GM12878 (cell line): ENCODE measurements at regions of chr10 and their contacts with region 1.

Region 1: DNA sequence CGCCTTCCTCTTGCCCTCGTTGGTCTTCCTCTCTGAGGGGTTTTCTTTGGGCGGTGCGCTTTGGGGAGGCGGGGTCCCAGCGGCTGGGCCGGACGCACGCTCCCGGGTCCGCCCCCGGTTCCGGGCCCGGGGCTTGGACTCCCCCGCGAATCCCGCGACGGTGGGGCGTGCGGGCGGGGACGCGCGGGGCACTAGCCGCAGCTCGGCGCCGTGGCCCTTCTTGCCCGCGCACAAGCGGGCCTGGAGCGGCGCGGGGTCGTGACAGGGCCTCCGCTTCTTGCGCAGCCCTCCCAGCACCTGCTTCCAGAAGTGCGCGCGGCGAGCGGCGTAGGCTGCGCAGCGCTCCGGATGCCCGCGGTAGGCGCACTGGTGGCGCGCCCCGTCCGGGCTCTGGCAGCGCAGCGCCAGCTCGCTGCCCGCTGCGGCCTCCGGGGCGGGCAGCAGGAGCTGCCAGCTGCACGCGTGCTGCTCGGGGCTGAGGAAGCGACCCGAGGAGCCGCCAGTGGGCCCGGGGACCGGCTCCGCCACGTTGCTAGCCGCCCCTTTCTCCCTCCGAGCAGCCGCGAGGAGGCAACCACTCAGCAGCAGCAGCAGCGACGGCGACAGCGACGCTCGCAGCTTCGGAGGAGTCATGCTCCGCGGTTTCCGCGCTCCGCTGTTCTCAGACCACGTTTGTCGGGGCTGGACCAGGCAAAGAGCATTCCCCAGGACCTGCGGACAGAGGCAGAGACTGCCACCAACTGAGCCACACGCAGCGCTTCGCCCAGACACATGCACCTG is 759 bp downstream of the FGFBP3 start:
- DNase-seq: peak; percentile 48
- ATAC-seq: peak; percentile 95
- H3K4me3 ChIP-seq: peak overlapping the region; percentile 82
- H3K27ac ChIP-seq: no peak overlapping the region
- H3K4me1 ChIP-seq: no peaks in the 10 kb centered on the region; the same call in 1 of the 2 replicates
- H3K27me3 ChIP-seq: no peaks in the 10 kb centered on the region; a peak in 1 of 4 replicates
- CTCF ChIP-seq: peak; percentile 45 to 62 (median 53)
- EP300 ChIP-seq: no peak
- POLR2A ChIP-seq: no peak; the same call in none of the 2 replicates
- RAD21 ChIP-seq: 0 out of 2 replicates have a peak, but pooled peaks have one; percentile 7

Region 2: GRCh38 chr10:90885176-90885575 is 1023.4 kb before region 1 on chr10:
- CTCF ChIA-PET with region 1: no interaction called
- POLR2A ChIA-PET with region 1: no interaction called
- RAD21 ChIA-PET with region 1: no interaction called
- SMC1A ChIA-PET with region 1: interaction called, 5 read pairs
- in situ Hi-C with region 1: loop called (anchors 25 kb)
- intact Hi-C with region 1: no loop called
- DNase-seq: no peak
- ATAC-seq: no peak
- H3K4me3 ChIP-seq: no peak overlapping the region
- H3K27ac ChIP-seq: no peak overlapping the region
- H3K4me1 ChIP-seq: no peaks in the 10 kb centered on the region
- H3K27me3 ChIP-seq: no peaks in the 10 kb centered on the region
- CTCF ChIP-seq: no peak
- EP300 ChIP-seq: no peak
- POLR2A ChIP-seq: no peak
- RAD21 ChIP-seq: no peak

Region 3: GRCh38 chr10:91389636-91390512 is 518.7 kb before region 1 on chr10:
- CTCF ChIA-PET with region 1: interaction called, 11 read pairs
- POLR2A ChIA-PET with region 1: no interaction called
- RAD21 ChIA-PET with region 1: interaction called, 8 read pairs
- SMC1A ChIA-PET with region 1: interaction called, 5 read pairs
- in situ Hi-C with region 1: loop called (anchors 25 kb)
- intact Hi-C with region 1: loop called (anchors 2 kb)
- DNase-seq: no peak
- ATAC-seq: peak; percentile 97
- H3K4me3 ChIP-seq: no peak overlapping the region
- H3K27ac ChIP-seq: no peak overlapping the region
- H3K4me1 ChIP-seq: no peaks in the 10 kb centered on the region
- H3K27me3 ChIP-seq: peaks cover 0 to 2% of the 10 kb centered on the region in 2 experiments; a peak in 1 of 4 replicates
- CTCF ChIP-seq: peak; percentile 40 to 51 (median 50); a peak in 5 of 6 replicates
- EP300 ChIP-seq: no peak
- POLR2A ChIP-seq: no peak
- RAD21 ChIP-seq: peak; percentile 59

Region 4: GRCh38 chr10:91493313-91493712 is 415.2 kb before region 1 on chr10:
- CTCF ChIA-PET with region 1: no interaction called
- POLR2A ChIA-PET with region 1: no interaction called
- RAD21 ChIA-PET with region 1: interaction called, 3 read pairs
- SMC1A ChIA-PET with region 1: interaction called, 3 read pairs
- in situ Hi-C with region 1: no loop called
- intact Hi-C with region 1: loop called (anchors 5 kb)
- DNase-seq: no peak
- ATAC-seq: peak; percentile 47; the same call in 2 of the 3 replicates
- H3K4me3 ChIP-seq: no peak overlapping the region
- H3K27ac ChIP-seq: no peak overlapping the region
- H3K4me1 ChIP-seq: no peaks in the 10 kb centered on the region
- H3K27me3 ChIP-seq: no peaks in the 10 kb centered on the region
- CTCF ChIP-seq: peak in 1 of 3 experiments; percentile 14; a peak in 2 of 6 replicates
- EP300 ChIP-seq: no peak
- POLR2A ChIP-seq: no peak
- RAD21 ChIP-seq: no peak

Region 5: DNA sequence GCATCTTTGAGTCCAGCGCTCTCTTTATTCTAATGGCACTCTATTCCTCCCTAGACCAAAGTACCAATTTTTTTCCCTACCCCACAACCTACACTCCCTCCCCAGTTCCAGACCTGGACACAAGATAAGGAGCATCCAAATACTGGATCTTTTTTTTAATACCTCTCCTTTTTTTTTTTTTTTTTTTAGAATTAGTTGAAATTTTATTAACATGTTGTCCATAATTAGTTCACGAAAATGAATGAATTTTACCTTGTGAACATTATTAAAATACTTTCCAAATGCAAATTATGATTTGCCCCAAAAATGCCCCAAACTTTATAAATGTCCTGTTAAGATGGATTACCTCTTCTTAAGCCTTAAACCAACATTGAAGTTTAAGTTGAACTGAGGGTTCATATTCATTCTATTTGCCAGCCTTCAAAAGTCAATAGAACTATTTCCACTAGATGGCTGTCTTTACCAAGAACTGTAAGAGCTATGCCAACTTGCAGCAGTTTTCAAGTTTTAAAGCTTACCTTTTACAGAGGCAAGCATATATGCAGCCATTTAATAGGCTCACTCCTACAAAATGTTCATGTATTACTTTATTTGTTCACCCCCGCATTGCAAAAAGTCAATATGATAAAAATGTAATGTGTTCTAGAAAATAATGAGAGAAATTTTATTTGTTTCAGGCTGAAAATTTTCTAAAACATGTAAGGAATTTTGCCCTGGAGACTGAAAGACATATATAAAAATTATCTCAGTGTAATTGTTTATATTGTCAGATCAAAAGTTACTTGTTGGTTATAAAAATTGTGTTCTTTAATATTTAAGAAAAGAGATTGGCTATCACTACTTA is 150.0 kb before region 1 on chr10:
- CTCF ChIA-PET with region 1: interaction called, 45 read pairs
- POLR2A ChIA-PET with region 1: no interaction called
- RAD21 ChIA-PET with region 1: interaction called, 33 read pairs
- SMC1A ChIA-PET with region 1: interaction called, 26 read pairs
- in situ Hi-C with region 1: loop called (anchors 5 kb)
- intact Hi-C with region 1: loop called (anchors 1 kb)
- DNase-seq: peak; percentile 11
- ATAC-seq: peak; percentile 74
- H3K4me3 ChIP-seq: no peak overlapping the region
- H3K27ac ChIP-seq: no peak overlapping the region
- H3K4me1 ChIP-seq: no peaks in the 10 kb centered on the region
- H3K27me3 ChIP-seq: no peaks in the 10 kb centered on the region
- CTCF ChIP-seq: peak; percentile 36 to 63 (median 42); a peak in 5 of 6 replicates
- EP300 ChIP-seq: no peak
- POLR2A ChIP-seq: no peak
- RAD21 ChIP-seq: peak; percentile 90

Region 6: GRCh38 chr10:91856637-91857036 is 51.9 kb before region 1 on chr10:
- CTCF ChIA-PET with region 1: interaction called, 7 read pairs
- POLR2A ChIA-PET with region 1: no interaction called
- RAD21 ChIA-PET with region 1: interaction called, 3 read pairs
- SMC1A ChIA-PET with region 1: interaction called, 6 read pairs
- in situ Hi-C with region 1: no loop called
- intact Hi-C with region 1: loop called (anchors 2 kb)
- DNase-seq: no peak
- ATAC-seq: no peak
- H3K4me3 ChIP-seq: no peak overlapping the region
- H3K27ac ChIP-seq: no peak overlapping the region
- H3K4me1 ChIP-seq: no peaks in the 10 kb centered on the region
- H3K27me3 ChIP-seq: no peaks in the 10 kb centered on the region
- CTCF ChIP-seq: peak; percentile 24 to 33 (median 29); a peak in 2 of 6 replicates
- EP300 ChIP-seq: no peak
- POLR2A ChIP-seq: no peak
- RAD21 ChIP-seq: peak; percentile 26; the same call in 1 of the 2 replicates

Region 7: GRCh38 chr10:91923371-91924211 is 15.1 kb after region 1 on chr10 and contains the start of gene BTAF1:
- CTCF ChIA-PET with region 1: interaction called, 11 read pairs
- POLR2A ChIA-PET with region 1: interaction called, 9 read pairs
- RAD21 ChIA-PET with region 1: interaction called, 6 read pairs
- SMC1A ChIA-PET with region 1: interaction called, 12 read pairs
- in situ Hi-C with region 1: no loop called
- intact Hi-C with region 1: no loop called
- DNase-seq: peak; percentile 56
- ATAC-seq: peak; percentile 95
- H3K4me3 ChIP-seq: peak within 1 kb of the TSS; percentile 86
- H3K27ac ChIP-seq: peak within 1 kb of the TSS; percentile 88
- H3K4me1 ChIP-seq: no peaks in the 10 kb centered on the region
- H3K27me3 ChIP-seq: no peaks in the 10 kb centered on the region; a peak in 1 of 4 replicates
- CTCF ChIP-seq: no peak
- EP300 ChIP-seq: no peak
- POLR2A ChIP-seq: peak; percentile 95
- RAD21 ChIP-seq: no peak
- polyA plus RNA-seq, gene BTAF1: 11.8 to 12.8 TPM